MCF 10A (cell line): ENCODE measurements at regions of chr4 and their contacts with region 1.

Region 1: DNA sequence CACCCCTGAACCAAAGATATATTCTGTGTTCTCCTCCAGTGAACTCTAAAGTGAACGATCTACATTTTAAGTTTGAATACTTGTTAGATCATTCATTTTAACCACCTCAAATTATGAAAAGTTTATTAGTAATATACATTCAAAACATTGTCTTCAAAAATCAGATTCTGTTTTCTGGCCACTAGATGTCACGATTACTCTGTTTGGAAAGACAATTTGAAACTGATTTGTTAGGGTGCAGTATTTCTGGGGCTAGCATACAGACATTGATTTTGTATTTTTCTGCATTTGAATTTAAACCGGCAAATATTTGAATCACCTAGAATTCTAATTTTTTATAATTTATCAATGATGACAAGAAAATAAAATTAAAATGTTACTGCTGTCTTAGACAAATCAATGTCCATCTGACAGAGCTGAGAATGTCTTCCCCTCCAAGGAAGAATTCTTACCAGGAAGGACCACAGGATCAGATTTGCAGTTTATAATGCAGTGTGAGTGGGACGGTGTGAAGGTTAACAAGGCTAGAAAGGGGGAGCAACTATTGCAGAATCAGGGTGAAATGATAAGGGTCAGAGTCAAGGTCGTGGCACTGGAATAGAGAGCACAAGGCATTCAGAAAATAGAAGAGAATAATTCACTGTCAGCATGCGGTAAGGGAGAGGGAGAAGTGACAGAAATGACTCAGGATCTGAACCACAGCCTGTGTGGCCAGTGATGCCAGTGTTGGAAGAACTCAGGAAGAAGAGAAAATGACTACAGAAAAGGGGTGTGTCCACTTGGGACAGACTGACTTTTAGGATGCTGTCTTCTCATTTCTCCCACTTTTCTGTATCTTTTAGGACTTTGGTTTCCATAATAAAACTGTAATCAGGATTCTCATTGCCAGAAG is 91.6 kb downstream of the ANXA10 start:
- DNase-seq: peak; percentile 50
- H3K4me3 Mint-ChIP-seq: no peak overlapping the region
- H3K27ac Mint-ChIP-seq: peak overlapping the region; percentile 4
- H3K4me1 Mint-ChIP-seq: no peaks in the 10 kb centered on the region
- H3K27me3 Mint-ChIP-seq: no peaks in the 10 kb centered on the region
- CTCF ChIP-seq: peak; percentile 66

Region 2: DNA sequence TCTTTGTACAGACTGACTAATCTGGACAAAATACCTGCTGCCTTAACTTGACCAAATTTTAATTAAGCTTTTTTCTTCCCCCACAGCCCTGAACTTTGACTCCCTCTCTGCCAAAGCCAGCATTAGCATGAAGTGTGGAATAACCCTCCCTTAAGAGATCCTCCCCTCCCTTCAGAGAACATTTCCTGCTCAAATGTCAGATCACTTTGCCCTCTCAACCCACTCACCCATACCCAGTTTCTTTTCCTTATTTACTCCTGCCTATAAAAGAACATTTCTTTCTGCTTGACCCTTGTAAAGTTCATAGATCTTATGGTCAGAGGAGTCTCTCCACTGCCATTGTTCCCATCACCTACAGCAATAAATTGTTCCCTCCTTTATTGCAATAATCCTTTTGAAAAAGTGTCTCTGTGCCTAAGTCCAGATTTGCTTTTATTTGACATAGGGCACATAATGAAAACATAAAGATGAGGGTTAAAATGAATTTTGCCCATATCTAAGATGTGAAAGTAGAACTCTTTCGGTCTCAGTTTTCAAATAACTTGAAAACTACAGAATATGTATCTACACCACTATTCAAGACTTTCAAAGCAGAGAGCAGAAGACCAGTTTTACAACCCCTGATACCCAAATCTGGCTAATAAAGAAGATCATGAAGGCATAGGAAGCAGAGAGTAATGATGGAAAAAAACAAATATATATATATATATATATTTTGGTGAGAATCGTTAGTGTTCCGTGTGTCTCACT is 381.3 kb before region 1 on chr4:
- CTCF ChIA-PET with region 1: no interaction called
- POLR2A ChIA-PET with region 1: no interaction called
- intact Hi-C with region 1: no loop called
- DNase-seq: no peak
- H3K4me3 Mint-ChIP-seq: no peak overlapping the region
- H3K27ac Mint-ChIP-seq: no peak overlapping the region
- H3K4me1 Mint-ChIP-seq: peaks cover 4% of the 10 kb centered on the region
- H3K27me3 Mint-ChIP-seq: no peaks in the 10 kb centered on the region
- CTCF ChIP-seq: no peak

Region 3: GRCh38 chr4:168480931-168481611 is 297.1 kb after region 1 on chr4:
- CTCF ChIA-PET with region 1: no interaction called
- POLR2A ChIA-PET with region 1: no interaction called
- intact Hi-C with region 1: loop called (anchors 10 kb)
- DNase-seq: peak; percentile 81
- H3K4me3 Mint-ChIP-seq: peak overlapping the region; percentile 96
- H3K27ac Mint-ChIP-seq: peak overlapping the region; percentile 95
- H3K4me1 Mint-ChIP-seq: peaks cover 26% of the 10 kb centered on the region
- H3K27me3 Mint-ChIP-seq: no peaks in the 10 kb centered on the region
- CTCF ChIP-seq: no peak

Region 4: GRCh38 chr4:168514249-168514852 is 330.4 kb after region 1 on chr4:
- CTCF ChIA-PET with region 1: interaction called, 13 read pairs
- POLR2A ChIA-PET with region 1: no interaction called
- intact Hi-C with region 1: loop called (anchors 2 kb)
- DNase-seq: peak; percentile 69
- H3K4me3 Mint-ChIP-seq: no peak overlapping the region
- H3K27ac Mint-ChIP-seq: no peak overlapping the region
- H3K4me1 Mint-ChIP-seq: peaks cover 10% of the 10 kb centered on the region
- H3K27me3 Mint-ChIP-seq: no peaks in the 10 kb centered on the region
- CTCF ChIP-seq: peak; percentile 33

Region 5: DNA sequence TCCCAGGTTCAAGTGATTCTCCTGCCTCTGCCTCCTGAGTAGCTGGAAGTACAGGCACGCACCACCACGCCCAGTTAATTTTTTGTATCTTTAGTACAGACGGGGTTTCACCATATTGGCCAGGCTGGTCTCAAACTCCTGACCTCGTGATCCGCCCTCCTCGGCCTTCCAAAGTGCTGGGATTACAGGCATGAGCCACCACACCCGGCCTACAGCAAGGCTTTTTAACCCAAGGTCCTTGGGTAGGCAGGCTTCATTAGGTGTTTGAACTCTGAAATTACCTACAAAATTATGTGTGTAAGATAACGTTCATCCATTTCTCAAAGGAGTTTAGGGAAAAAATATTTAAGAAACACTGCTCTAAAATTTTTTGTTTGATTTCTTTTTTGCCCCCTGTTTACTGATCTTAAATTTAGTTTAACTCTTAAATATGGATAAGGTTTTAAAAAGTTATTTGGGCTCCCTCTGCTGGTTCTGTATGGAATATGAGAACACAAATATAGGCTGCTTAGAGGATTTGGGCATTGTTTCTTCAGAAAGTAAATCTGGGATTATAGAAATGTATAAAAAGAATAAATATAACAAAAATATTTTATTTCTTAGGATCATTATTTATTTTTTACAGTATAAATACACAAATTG is 733.3 kb after region 1 on chr4:
- CTCF ChIA-PET with region 1: interaction called, 6 read pairs
- POLR2A ChIA-PET with region 1: no interaction called
- intact Hi-C with region 1: loop called (anchors 1 kb)
- DNase-seq: peak; percentile 64
- H3K4me3 Mint-ChIP-seq: no peak overlapping the region
- H3K27ac Mint-ChIP-seq: no peak overlapping the region
- H3K4me1 Mint-ChIP-seq: peaks cover 5% of the 10 kb centered on the region
- H3K27me3 Mint-ChIP-seq: no peaks in the 10 kb centered on the region
- CTCF ChIP-seq: peak; percentile 52

Region 6: DNA sequence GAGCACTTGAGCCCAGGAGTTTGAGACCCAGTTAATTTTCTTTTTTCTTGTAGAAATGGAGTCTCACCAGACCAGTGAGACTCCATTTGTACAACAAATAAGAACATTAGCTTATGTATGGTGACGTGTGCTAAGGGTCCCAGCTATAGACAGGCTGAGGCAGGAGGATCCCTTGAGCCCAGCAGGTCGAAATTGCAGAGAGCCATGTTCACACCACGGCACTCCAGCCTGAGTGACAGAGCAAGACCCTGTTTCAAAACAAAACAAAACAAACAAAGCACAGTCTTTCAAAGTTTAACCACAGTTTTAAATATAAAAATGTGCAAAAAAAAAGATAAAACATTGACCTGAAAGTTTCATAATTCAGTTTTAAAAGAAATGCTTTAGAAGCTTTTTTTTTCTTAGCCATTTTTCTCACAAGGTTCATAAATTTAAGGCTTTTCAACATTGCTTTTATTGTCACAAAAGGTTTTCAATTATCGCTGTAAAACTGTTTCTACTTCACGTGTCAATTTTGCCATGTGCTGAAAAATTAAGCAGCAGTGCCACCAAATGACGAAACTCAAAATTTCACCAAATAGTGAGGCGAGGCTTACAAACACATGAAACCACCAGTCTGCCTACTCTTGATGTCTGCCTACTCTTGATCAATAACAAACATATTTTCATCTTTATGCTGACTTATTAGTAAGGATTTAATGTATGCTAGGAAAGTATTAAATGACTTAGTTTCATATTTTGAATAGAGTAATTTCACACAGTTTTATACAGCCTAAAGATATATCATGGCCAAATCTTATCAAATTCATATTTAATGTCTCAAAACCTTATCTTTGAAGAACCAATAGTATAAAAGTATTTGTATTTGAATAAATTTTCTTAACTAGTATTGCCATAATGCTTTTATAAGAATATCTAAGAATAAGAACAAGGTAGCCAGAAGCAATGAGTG is 1302.1 kb after region 1 on chr4:
- CTCF ChIA-PET with region 1: interaction called, 3 read pairs
- POLR2A ChIA-PET with region 1: no interaction called
- intact Hi-C with region 1: loop called (anchors 5 kb)
- DNase-seq: peak; percentile 66
- H3K4me3 Mint-ChIP-seq: no peak overlapping the region
- H3K27ac Mint-ChIP-seq: peak overlapping the region; percentile 15
- H3K4me1 Mint-ChIP-seq: no peaks in the 10 kb centered on the region
- H3K27me3 Mint-ChIP-seq: no peaks in the 10 kb centered on the region
- CTCF ChIP-seq: peak; percentile 51